ENCODE measurements at regions of chr14 and their contacts with region 1.

Region 1: DNA sequence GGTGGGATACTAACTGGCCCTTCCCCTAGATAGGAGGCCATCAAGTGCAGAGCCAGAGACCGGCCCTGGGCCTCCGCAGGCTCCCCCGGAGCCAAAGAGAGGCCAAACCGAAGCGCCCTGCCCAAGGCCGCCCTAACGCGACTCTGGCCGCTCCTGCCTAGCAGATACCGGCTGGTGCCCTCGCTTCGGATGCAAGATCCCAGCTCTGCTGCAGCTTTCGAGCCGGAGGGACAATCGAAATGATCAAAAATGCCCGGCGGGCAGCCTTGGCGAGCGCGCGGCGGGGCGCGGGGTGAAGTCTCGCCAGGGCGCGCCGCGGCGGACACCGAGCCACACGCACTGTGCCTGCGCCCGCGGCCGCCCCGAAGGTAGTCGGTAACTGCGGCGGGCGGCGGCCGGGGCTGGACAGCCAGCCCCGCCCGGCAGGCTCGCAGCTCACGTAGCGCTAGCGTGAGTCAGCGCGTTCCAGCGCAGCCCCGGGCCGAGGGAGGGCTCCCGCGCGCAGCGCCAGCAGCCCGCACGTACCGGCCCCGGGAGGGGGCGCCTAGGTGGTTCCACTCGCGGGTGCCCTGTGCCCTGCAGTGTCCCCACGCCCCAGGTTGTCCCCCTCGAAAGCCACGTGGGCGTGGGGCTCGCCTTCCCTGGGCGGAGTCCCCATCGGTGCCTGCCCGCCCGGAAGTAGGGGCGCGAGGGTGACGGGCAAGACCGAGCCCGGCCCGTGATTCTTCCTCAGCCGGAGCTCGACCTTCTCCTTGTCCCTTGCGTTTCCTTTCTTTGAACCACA is 109.2 kb upstream of the EGLN3 start:
- DNase-seq: peak; percentile 87 to 88 (median 88)
- ATAC-seq: peak; percentile 98
- H3K4me3 ChIP-seq: peak overlapping the region; percentile 40
- H3K27ac ChIP-seq: peak overlapping the region; percentile 84
- H3K4me1 ChIP-seq: peaks cover 13 to 33% of the 10 kb centered on the region in 2 experiments; a peak in 4 of 5 replicates
- H3K27me3 ChIP-seq: no peaks in the 10 kb centered on the region
- CTCF ChIP-seq: peak; percentile 39 to 70 (median 48); a peak in 5 of 6 replicates
- EP300 ChIP-seq: peak; percentile 15; the same call in 1 of the 2 replicates
- POLR2A ChIP-seq: peak; percentile 63
- RAD21 ChIP-seq: peak; percentile 28 to 46; a peak in 2 of 4 replicates

Region 2: DNA sequence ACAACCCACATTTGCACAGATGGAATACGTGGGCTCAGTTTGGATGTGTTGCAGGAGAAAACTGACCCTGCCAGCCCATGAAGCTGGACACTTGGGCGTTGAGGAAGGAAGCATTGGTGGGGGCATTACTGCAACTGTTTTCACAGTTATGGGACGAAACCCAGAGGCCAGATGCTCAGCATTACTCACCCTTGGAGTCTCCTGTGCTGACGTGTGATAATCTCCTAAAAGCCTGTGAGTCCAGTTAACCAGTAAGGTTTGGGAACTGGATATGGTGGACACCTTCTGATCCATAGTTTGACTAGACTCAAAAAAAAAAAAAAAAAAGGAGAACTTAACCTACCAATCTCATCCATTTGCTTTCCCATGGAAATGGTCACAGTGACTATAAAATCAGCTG is 56.4 kb before region 1 on chr14:
- CTCF ChIA-PET with region 1: no interaction called
- POLR2A ChIA-PET with region 1: interaction called, 6 read pairs
- in situ Hi-C with region 1: loop called (anchors 10 kb)
- intact Hi-C with region 1: loop called (anchors 1 kb)
- DNase-seq: peak in 2 of 4 experiments; percentile 32 to 47
- ATAC-seq: peak; percentile 43
- H3K4me3 ChIP-seq: no peak overlapping the region
- H3K27ac ChIP-seq: no peak overlapping the region
- H3K4me1 ChIP-seq: peaks cover 4 to 17% of the 10 kb centered on the region in 2 experiments; a peak in 3 of 5 replicates
- H3K27me3 ChIP-seq: no peaks in the 10 kb centered on the region
- CTCF ChIP-seq: no peak
- EP300 ChIP-seq: no peak
- POLR2A ChIP-seq: no peak
- RAD21 ChIP-seq: no peak

Measured in K562 (cell line).